Activated T-helper 2 cell treated with anti-CD3 and anti-CD28 coated beads, Interferon-gamma antibody, Interleukin-2, Interleukin-4, amounts not matched to agents 10 μg/mL and 5 μg/mL and 100 μg/mL, durations not matched to agents 14 hours and 24 hours and 36 hours (primary cell): ENCODE measurements at regions of chr5 and their contacts with region 1.

Region 1: DNA sequence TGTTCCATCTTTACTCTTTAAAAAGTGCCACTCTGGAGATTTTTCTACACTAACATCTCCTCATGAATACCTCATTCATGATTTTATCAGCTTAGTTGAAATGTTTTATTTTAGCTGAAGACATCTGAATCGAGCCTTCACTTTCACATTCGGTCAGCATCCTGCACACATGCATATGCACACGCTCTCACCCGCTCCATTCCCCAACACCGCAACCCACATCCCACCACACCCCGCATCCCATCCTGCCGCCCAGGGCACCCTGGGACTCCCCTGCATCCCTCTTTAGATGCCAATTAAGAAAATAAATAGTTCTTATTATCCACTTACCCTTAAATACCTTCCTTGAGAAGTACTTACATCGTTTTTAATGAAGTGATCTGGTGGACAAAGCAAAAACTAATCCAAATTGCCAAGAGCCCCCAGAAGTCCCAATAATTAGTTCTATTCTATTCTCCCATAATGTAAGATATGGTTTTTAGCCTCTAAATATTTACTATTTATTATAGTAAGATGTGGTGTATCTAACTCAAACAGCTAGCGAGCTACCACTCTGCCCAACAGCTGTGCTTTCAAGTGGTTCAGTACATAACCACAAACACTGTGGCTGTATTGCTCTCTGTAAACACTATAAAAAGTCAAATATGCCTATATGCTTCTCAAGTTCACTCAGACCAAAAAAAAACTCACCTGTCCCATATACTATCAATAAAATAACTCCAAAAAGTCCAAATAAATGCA is 38.2 kb downstream of the GZMK start:
- DNase-seq: peak; percentile 78
- H3K4me3 Mint-ChIP-seq: peak overlapping the region; percentile 64
- H3K27ac Mint-ChIP-seq: peak overlapping the region; percentile 94
- H3K4me1 Mint-ChIP-seq: peaks cover 70% of the 10 kb centered on the region
- H3K27me3 Mint-ChIP-seq: no peaks in the 10 kb centered on the region

Region 2: GRCh38 chr5:54844905-54845566 is 217.2 kb before region 1 on chr5:
- intact Hi-C with region 1: no loop called
- DNase-seq: no peak
- H3K4me3 Mint-ChIP-seq: no peak overlapping the region
- H3K27ac Mint-ChIP-seq: no peak overlapping the region
- H3K4me1 Mint-ChIP-seq: peaks cover 15% of the 10 kb centered on the region
- H3K27me3 Mint-ChIP-seq: peaks cover 9% of the 10 kb centered on the region

Region 3: GRCh38 chr5:54990841-54991258 is 71.4 kb before region 1 on chr5:
- intact Hi-C with region 1: loop called (anchors 5 kb)
- DNase-seq: no peak
- H3K4me3 Mint-ChIP-seq: no peak overlapping the region
- H3K27ac Mint-ChIP-seq: no peak overlapping the region
- H3K4me1 Mint-ChIP-seq: peaks cover 70% of the 10 kb centered on the region
- H3K27me3 Mint-ChIP-seq: peaks cover 8% of the 10 kb centered on the region

Region 4: DNA sequence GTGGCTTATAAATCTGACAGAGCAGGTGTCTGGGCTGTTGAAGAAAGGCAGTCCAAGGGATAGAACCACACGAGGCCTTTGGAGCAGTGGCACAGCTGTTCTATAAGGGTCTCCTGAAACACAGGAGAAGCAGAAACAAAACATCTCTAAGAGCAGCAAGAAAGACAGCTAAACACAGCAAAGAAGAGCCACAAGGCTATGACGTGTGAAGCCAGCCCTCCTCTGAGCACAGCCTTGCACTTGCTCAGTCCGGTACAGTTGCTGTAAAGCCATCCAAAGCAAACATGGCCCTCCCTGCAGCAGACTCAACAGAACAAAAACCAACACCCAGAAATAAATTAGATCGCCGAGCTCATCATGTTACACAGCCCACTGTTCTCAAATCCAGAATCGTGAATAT is 40.8 kb before region 1 on chr5:
- intact Hi-C with region 1: loop called (anchors 2 kb)
- DNase-seq: no peak
- H3K4me3 Mint-ChIP-seq: no peak overlapping the region
- H3K27ac Mint-ChIP-seq: no peak overlapping the region
- H3K4me1 Mint-ChIP-seq: peaks cover 41% of the 10 kb centered on the region
- H3K27me3 Mint-ChIP-seq: no peaks in the 10 kb centered on the region

Region 5: DNA sequence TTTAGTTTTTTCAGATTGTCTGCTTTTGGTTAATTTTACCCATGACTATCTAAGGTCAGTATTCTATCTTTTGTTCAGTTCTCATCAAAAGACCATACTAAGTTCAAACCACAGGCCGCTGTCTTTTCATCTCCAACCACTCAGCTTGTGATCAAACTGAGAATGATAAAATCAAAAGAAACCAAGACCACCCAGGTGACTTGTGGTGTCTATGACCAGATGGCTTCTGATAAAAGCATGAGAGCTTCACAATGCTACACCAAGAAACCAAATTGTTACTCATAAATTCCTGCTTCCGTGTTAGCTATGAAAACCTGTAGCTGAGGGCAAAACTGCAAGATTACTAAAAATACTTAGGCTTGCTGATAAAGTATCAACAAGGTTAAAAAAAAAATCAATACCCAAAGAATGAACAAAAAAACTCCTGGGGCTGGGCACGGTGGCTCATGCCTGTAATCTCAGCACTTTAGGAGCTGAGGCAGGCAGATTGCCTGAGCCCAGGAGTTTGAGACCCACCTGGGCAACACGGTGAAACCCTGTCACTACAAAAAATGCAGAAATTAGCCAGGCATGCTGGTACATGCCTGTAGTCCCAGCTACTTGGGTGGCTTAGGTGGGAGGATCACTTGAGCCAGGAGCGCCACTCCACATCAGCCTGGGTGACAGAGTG is 72.0 kb after region 1 on chr5:
- intact Hi-C with region 1: loop called (anchors 2 kb)
- DNase-seq: peak; percentile 44
- H3K4me3 Mint-ChIP-seq: no peak overlapping the region
- H3K27ac Mint-ChIP-seq: peak overlapping the region; percentile 39
- H3K4me1 Mint-ChIP-seq: peaks cover 41% of the 10 kb centered on the region
- H3K27me3 Mint-ChIP-seq: peaks cover 2% of the 10 kb centered on the region